Activated T-helper 2 cell treated with anti-CD3 and anti-CD28 coated beads, Interferon-gamma antibody, Interleukin-2, Interleukin-4, amounts not matched to agents 10 μg/mL and 5 μg/mL and 100 μg/mL, durations not matched to agents 14 hours and 24 hours and 36 hours (primary cell): ENCODE measurements at regions of chr6 and their contacts with region 1.

Region 1: GRCh38 chr6:155126727-155127439 is 131.8 kb downstream of the TIAM2 start:
- DNase-seq: no peak
- H3K4me3 Mint-ChIP-seq: peak overlapping the region; percentile 39
- H3K27ac Mint-ChIP-seq: peak overlapping the region; percentile 99
- H3K4me1 Mint-ChIP-seq: peaks cover 47% of the 10 kb centered on the region
- H3K27me3 Mint-ChIP-seq: no peaks in the 10 kb centered on the region

Region 2: GRCh38 chr6:154995284-154996015 is 131.4 kb before region 1 on chr6 and contains the start of gene TIAM2:
- intact Hi-C with region 1: loop called (anchors 5 kb)
- DNase-seq: peak; percentile 18
- H3K4me3 Mint-ChIP-seq: peak within 1 kb of the TSS; percentile 71
- H3K27ac Mint-ChIP-seq: no peak within 1 kb of the TSS
- H3K4me1 Mint-ChIP-seq: peaks cover 16% of the 10 kb centered on the region
- H3K27me3 Mint-ChIP-seq: peaks cover 2% of the 10 kb centered on the region
- total RNA-seq, gene TIAM2: 41.4 and 46.0 TPM in 2 replicates

Region 3: DNA sequence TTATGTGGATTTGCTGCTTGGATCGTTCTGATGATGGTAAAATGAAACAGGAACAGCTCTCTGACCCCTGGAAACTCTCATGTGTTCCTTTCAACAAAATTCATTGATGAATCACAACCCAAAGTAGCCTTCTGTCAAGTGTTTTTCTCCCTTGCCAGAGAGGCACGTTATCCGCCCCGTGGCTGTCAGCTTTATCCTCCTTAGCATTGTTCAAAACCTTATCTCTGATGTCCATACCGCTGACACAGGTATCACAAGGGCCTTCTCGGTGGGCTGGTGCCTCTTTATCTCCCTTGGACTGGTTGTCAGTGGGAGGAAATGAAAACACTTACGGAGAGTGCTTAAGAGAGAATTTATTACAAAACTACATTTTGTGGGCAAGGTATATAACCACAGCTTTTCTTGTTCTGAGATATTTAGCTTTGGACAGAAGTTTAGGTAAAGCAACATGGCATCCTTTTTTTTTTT is 46.9 kb before region 1 on chr6:
- intact Hi-C with region 1: loop called (anchors 1 kb)
- DNase-seq: no peak
- H3K4me3 Mint-ChIP-seq: no peak overlapping the region
- H3K27ac Mint-ChIP-seq: peak overlapping the region; percentile 85
- H3K4me1 Mint-ChIP-seq: peaks cover 55% of the 10 kb centered on the region
- H3K27me3 Mint-ChIP-seq: no peaks in the 10 kb centered on the region

Region 4: DNA sequence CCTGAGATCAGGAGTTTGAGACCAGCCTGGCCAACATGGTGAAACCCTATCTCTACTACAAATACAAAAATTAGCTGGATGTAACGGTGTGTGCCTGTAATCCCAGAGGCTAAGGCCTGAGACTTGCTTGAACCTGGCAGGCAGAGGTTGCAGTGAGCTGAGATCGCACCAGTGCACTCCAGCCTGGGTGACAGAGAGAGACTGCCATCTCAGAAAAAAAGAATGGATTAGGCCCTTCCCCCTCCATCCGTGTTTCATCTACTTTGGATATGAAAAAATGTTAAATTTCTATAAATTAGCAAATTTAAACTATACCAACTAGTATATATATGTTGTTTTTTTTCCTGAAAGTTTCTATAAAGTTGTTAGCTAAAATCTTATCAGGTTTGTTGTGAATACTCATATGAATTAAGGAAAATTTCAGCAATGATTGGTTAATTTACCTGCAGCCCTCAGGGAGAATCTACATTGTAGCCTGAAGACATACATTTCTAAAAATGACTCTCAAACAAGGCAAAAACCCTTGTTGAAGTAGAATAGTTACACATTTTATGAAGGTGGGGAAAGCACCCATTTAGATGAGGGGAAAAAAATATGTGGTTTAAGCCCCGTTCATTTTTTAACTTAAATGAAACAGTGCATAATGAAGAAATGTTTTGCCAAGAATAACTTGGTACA is 10.9 kb before region 1 on chr6:
- intact Hi-C with region 1: loop called (anchors 1 kb)
- DNase-seq: no peak
- H3K4me3 Mint-ChIP-seq: no peak overlapping the region
- H3K27ac Mint-ChIP-seq: peak overlapping the region; percentile 78
- H3K4me1 Mint-ChIP-seq: peaks cover 33% of the 10 kb centered on the region
- H3K27me3 Mint-ChIP-seq: no peaks in the 10 kb centered on the region

Region 5: DNA sequence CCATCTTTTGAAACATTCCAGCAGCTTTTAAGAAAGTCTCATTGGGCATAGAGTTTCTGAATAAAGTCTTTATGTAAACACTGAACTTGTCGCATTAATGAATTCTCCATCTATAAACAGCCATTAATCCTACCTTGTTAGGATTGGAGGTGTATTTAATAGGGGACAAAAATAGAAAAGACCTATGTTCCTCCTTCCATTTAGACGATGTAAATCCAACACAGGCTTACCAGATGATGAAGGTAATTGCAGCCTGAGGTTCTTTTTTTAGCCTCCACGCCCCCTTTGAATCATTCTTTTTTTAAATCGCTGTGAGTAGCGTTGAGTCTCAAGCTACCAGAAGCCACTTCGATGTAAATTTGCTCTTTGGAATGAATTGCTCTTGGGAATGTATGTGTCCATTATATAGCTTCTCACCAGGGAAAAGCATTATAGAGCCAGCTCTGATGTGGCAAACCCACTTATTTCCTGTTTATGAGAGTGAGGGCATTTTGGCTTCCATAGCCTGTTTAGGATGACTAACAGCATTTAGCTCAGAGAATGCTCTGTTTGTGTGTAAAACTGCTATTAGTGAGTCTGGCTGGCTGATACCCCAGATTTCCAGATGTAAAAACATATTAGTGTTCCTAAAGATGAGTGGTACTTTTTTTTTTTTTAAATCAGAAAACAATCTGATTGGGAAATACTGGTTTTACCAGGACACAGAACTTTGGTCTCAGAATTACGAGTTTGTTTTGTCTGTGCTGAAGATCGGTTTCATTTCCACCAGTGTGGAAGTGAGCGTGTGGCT is 62.0 kb after region 1 on chr6:
- intact Hi-C with region 1: loop called (anchors 1 kb)
- DNase-seq: no peak
- H3K4me3 Mint-ChIP-seq: peak overlapping the region; percentile 26
- H3K27ac Mint-ChIP-seq: peak overlapping the region; percentile 89
- H3K4me1 Mint-ChIP-seq: peaks cover 46% of the 10 kb centered on the region
- H3K27me3 Mint-ChIP-seq: no peaks in the 10 kb centered on the region